ENCODE measurements at regions of chr12 and their contacts with region 1.

Region 1: GRCh38 chr12:123075646-123076171 is 75.2 kb downstream of the PITPNM2 start:
- DNase-seq: peak; percentile 87
- ATAC-seq: peak; percentile 75
- H3K4me3 Mint-ChIP-seq: peak overlapping the region; percentile 68
- H3K27ac Mint-ChIP-seq: peak overlapping the region; percentile 94
- H3K4me1 Mint-ChIP-seq: peaks cover 56% of the 10 kb centered on the region
- H3K27me3 Mint-ChIP-seq: no peaks in the 10 kb centered on the region

Region 2: GRCh38 chr12:122895705-122896636 is 179.7 kb before region 1 on chr12 and contains the start of gene VPS37B:
- CTCF ChIA-PET with region 1: no interaction called
- POLR2A ChIA-PET with region 1: no interaction called
- intact Hi-C with region 1: loop called in 1 of 2 experiments (anchors 5 kb)
- DNase-seq: peak; percentile 93
- ATAC-seq: peak; percentile 67
- H3K4me3 Mint-ChIP-seq: peak within 1 kb of the TSS; percentile 86
- H3K27ac Mint-ChIP-seq: peak within 1 kb of the TSS; percentile 87
- H3K4me1 Mint-ChIP-seq: peaks cover 87% of the 10 kb centered on the region
- H3K27me3 Mint-ChIP-seq: peaks cover 7% of the 10 kb centered on the region
- total RNA-seq, gene VPS37B: 9.4 to 11.4 TPM

Region 3: DNA sequence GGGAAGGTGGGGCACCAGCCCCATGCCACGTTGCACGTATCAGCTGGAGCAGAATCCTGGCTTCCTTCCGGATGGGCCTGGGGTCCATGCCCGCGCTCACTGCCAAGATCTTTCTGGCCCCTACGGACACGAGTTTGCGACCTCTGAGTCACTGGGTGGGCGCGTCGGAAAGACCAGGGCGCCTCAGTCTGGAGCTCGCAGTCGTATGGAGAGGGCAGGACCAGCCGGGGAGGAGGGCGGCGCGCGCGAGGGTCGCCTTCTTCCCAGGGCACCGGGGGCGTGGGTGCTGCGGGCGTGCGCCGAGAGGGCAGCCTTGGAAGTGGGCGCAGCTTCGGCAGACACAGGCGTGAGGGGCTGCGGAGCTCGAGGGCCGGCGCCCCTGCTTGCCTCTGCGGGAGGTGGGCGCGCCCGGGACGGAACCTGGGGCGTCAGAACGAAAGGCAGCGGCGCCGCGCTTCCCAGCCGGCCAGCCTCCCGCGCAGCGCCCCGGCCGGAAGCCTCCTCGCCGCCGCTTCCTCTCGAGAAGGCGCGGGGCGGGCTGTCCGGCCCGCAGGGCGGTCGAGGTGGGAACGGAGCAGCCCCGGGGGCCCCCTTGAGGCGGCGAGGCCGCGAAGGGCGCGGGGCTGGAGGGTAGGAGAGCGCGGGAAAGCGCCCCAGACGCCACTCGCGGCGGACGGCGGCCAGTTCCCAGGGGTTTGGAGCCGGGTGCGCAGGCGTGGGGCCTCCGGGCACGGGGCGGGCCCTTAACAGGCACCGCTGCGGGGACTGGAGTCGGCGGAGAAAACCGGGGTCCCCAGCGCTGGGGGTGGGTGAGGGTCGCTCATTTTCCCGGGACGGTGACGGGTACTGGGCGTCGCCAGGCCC is 95.3 kb before region 1 on chr12 and contains the start of gene ARL6IP4:
- CTCF ChIA-PET with region 1: no interaction called
- POLR2A ChIA-PET with region 1: interaction called, 3 read pairs
- intact Hi-C with region 1: loop called (anchors 1 to 5 kb)
- DNase-seq: peak; percentile 82
- ATAC-seq: peak; percentile 77
- H3K4me3 Mint-ChIP-seq: peak within 1 kb of the TSS; percentile 87
- H3K27ac Mint-ChIP-seq: peak within 1 kb of the TSS; percentile 85
- H3K4me1 Mint-ChIP-seq: peaks cover 55% of the 10 kb centered on the region
- H3K27me3 Mint-ChIP-seq: no peaks in the 10 kb centered on the region
- total RNA-seq, gene ARL6IP4: 141 to 163 TPM

Region 4: GRCh38 chr12:123043536-123044001 is 32.1 kb before region 1 on chr12:
- CTCF ChIA-PET with region 1: interaction called, 6 read pairs
- POLR2A ChIA-PET with region 1: interaction called, 4 read pairs
- intact Hi-C with region 1: loop called (anchors 1 to 2 kb)
- DNase-seq: peak; percentile 89
- ATAC-seq: peak; percentile 97
- H3K4me3 Mint-ChIP-seq: no peak overlapping the region
- H3K27ac Mint-ChIP-seq: peak overlapping the region; percentile 47
- H3K4me1 Mint-ChIP-seq: peaks cover 28% of the 10 kb centered on the region
- H3K27me3 Mint-ChIP-seq: no peaks in the 10 kb centered on the region

Region 5: DNA sequence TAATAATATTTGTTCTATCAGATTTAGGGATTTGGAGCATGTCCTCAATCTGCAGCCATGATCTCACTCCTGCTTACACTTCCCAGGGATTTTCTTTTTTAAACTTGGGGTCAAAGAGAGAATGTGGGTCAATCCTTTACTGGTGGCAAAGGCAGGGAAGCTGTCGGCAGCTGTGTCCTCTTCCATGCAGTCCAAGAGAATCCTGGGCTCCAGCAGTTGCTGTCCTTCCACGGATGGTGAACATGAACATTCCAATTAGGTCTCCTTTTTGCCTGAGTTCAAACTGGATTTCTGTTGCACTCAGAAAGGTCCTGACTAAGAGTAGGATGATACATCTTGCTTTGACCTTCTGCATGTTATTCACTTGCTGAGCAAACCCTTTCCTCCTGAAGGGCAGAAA is 21.3 kb before region 1 on chr12:
- CTCF ChIA-PET with region 1: no interaction called
- POLR2A ChIA-PET with region 1: no interaction called
- intact Hi-C with region 1: no loop called
- DNase-seq: no peak
- ATAC-seq: no peak
- H3K4me3 Mint-ChIP-seq: no peak overlapping the region
- H3K27ac Mint-ChIP-seq: no peak overlapping the region
- H3K4me1 Mint-ChIP-seq: peaks cover 7% of the 10 kb centered on the region
- H3K27me3 Mint-ChIP-seq: no peaks in the 10 kb centered on the region

Region 6: GRCh38 chr12:123106628-123107359 is 31.1 kb after region 1 on chr12:
- CTCF ChIA-PET with region 1: interaction called, 3 read pairs
- POLR2A ChIA-PET with region 1: interaction called, 6 read pairs
- intact Hi-C with region 1: loop called in 1 of 2 experiments (anchors 2 kb)
- DNase-seq: peak; percentile 77
- ATAC-seq: peak; percentile 97
- H3K4me3 Mint-ChIP-seq: peak overlapping the region; percentile 37
- H3K27ac Mint-ChIP-seq: peak overlapping the region; percentile 91
- H3K4me1 Mint-ChIP-seq: peaks cover 55% of the 10 kb centered on the region
- H3K27me3 Mint-ChIP-seq: no peaks in the 10 kb centered on the region

Region 7: DNA sequence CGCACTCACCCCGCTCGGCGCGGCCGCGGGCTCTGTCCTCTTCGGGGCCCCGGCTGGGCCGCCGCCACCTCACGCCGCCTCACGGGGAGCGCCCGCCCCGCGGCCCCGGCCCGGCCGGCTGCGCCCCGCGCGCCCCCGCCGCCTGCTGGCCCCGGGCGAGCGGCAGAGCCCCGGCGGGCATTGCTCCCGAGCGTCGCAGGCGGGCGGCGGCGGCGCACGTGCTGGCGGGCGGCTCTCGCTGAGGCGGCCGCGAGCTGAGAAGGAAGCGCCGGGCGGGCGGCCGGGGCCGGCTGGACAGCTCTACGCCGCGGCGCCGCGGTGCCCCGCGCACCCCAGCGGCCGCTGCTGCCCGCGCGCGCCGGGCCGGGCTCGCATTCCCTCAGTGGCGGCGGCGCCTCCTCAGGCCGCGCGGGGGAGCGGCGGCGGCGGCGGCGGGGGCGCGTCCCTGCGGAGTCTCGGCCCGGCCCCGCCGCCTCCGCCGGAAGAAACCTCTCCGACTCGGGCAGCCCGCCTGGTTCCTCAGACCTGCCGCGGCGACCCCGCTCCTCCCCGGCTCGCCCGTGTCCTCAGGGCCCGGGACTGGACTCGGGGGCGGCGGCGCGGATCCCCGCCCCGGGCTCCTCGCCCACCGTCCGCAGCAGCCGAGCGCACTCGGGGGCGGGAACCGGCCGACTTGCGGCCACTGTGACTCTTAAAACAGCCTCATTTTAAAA is 75.2 kb after region 1 on chr12 and contains the start of gene PITPNM2:
- CTCF ChIA-PET with region 1: interaction called, 6 read pairs
- POLR2A ChIA-PET with region 1: no interaction called
- intact Hi-C with region 1: loop called (anchors 1 to 2 kb)
- DNase-seq: peak; percentile 73
- ATAC-seq: peak; percentile 84
- H3K4me3 Mint-ChIP-seq: peak within 1 kb of the TSS; percentile 74
- H3K27ac Mint-ChIP-seq: peak within 1 kb of the TSS; percentile 85
- H3K4me1 Mint-ChIP-seq: peaks cover 28% of the 10 kb centered on the region
- H3K27me3 Mint-ChIP-seq: no peaks in the 10 kb centered on the region
- total RNA-seq, gene PITPNM2: 8.3 to 9.5 TPM